AG04449 (cell line): ENCODE measurements at regions of chr19 and their contacts with region 1.

Region 1: DNA sequence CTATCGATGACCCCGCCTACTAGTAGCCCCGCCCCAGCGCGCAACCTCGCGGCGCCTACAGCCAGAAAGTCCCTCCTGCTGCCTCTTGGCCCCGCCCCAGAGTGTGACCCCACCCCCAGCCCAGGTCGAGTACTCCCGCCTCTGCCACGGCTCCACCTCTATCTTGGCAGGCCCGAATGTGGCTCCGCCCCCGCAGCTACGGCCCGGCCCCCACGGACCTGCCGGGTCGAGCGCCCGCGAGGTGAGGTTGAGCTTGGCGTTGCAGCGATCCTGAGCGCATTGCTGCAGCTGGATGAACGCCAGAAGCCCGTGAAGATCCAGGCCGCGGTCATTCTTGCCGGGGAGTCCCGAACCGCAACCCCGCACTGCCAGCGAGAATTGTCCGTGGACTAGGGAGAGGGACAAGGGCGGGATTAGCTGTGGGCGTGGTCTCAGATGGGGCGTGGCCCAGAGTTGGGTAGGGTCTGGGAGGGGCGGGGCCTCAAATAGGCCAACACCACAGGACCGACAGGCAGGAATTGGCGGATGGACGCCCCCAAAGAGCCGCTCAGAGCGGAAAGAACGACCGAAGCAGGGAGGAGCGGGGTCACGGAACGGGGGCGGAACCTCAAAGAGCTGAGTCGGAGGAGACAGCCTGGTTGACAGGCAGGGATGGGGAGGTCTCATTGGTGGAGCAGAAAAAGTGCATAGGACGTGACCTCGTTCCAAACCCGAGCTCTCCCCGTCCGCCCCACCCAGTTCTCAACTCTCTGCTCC is 1.8 kb downstream of the LYPD3 start:
- DNase-seq: no peak
- H3K4me3 ChIP-seq: peak overlapping the region; percentile 82
- CTCF ChIP-seq: no peak

Region 2: GRCh38 chr19:43474986-43475705 is 11.6 kb after region 1 on chr19:
- CTCF ChIA-PET with region 1: interaction called, 12 read pairs
- POLR2A ChIA-PET with region 1: no interaction called
- DNase-seq: peak; percentile 53
- H3K4me3 ChIP-seq: peak overlapping the region; percentile 45
- CTCF ChIP-seq: no peak